H1 (cell line): ENCODE measurements at regions of chr11 and their contacts with region 1.

Region 1: GRCh38 chr11:111446404-111447111 is 65.6 kb downstream of the BTG4 start:
- DNase-seq: peak in 1 of 2 experiments; percentile 63
- H3K4me3 ChIP-seq: no peak overlapping the region
- H3K27ac ChIP-seq: no peak overlapping the region
- H3K4me1 ChIP-seq: peaks cover 0 to 6% (median 2%) of the 10 kb centered on the region in 4 experiments; a peak in 4 of 7 replicates
- H3K27me3 ChIP-seq: no peaks in the 10 kb centered on the region
- CTCF ChIP-seq: peak; percentile 88 to 95 (median 88)
- EP300 ChIP-seq: no peak
- POLR2A ChIP-seq: no peak
- RAD21 ChIP-seq: peak; percentile 95 to 98

Region 2: DNA sequence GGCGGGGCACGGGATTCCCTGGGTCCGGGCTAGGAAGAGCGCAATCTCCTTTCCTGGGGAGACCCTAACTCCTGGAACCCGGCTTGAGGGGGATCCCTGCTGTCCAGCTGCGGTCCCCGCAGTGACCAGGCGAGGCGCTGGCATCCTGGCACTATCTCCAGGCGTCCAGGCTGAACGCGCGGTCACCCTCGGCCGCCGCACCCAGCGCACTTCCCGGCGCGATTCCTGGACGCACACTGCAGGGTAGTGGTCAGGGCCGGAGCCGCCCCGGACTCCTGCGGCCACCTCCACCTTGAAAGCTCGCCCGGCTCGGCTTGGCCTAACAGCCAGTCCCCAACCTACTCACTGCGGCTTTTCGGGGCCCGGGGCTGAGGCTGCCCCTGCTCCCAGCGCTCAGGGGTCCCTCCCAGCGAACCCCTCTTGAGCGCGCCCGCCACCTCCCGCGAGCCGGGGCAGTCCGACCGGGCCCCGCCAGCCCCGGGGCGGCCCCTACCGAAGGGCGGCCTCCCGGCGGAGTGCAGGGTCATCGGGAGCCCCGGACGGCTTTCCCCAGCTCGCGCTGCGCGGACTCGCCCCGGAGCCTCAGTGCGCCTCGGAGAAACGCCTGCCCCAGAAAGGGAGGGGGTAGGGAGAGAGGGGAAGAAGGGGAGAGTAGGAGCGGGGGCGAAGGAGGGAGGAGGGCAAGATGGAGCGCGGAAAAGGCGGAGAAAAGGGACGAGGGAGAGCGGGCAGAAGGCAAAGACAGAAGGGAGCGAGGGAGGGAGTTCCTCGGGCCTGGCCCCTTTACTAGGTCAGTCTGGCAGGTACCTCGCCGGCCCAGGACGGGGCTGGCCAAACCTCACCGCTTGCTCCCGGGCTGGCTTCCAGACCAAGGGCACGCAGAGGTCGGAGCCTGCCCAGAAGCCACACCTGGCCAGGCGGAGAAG is 147.2 kb before region 1 on chr11:
- CTCF ChIA-PET with region 1: interaction called, 11 read pairs
- POLR2A ChIA-PET with region 1: interaction called, 5 read pairs
- DNase-seq: peak in 1 of 2 experiments; percentile 83
- H3K4me3 ChIP-seq: peak overlapping the region; percentile 69 to 95 (median 76)
- H3K27ac ChIP-seq: no peak overlapping the region
- H3K4me1 ChIP-seq: peaks cover 1 to 9% (median 6%) of the 10 kb centered on the region in 4 experiments; a peak in 6 of 7 replicates
- H3K27me3 ChIP-seq: peaks cover 0 to 33% (median 16%) of the 10 kb centered on the region in 4 experiments; a peak in 5 of 7 replicates
- CTCF ChIP-seq: peak; percentile 49 to 69 (median 64)
- EP300 ChIP-seq: no peak
- POLR2A ChIP-seq: peak in 1 of 2 experiments; percentile 52; a peak in 1 of 3 replicates
- RAD21 ChIP-seq: peak in 1 of 2 experiments; percentile 34; a peak in 1 of 4 replicates

Region 3: DNA sequence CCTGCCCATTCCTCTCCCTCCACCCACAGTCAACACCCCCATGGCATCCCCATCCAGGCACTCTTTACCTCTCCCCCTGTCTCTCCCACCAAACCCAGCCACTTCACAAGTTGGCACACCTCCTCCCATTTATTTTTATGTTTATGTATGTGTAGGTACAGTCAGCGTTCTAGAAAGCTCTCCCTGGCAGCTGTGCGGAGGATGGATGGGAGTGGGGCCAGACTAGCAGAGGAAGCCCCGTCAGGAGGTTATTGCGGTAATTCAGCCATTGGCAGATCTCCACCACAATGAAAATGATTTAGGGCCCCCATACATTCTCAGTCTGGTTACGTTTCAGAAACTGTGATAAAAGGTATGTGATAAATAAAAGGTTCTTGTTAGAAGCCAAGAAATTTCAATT is 14.3 kb after region 1 on chr11:
- CTCF ChIA-PET with region 1: interaction called, 28 read pairs
- POLR2A ChIA-PET with region 1: no interaction called
- DNase-seq: no peak
- H3K4me3 ChIP-seq: no peak overlapping the region
- H3K27ac ChIP-seq: no peak overlapping the region
- H3K4me1 ChIP-seq: no peaks in the 10 kb centered on the region
- H3K27me3 ChIP-seq: no peaks in the 10 kb centered on the region; a peak in 1 of 7 replicates
- CTCF ChIP-seq: no peak
- EP300 ChIP-seq: no peak
- POLR2A ChIP-seq: no peak
- RAD21 ChIP-seq: no peak